AG04450 (cell line): ENCODE measurements at regions of chr6 and their contacts with region 1.

Region 1: GRCh38 chr6:97215157-97215769 is 67.8 kb downstream of the MMS22L start:
- DNase-seq: peak; percentile 29
- H3K4me3 ChIP-seq: no peak overlapping the region
- H3K27ac ChIP-seq: no peak overlapping the region
- H3K27me3 ChIP-seq: no peaks in the 10 kb centered on the region
- CTCF ChIP-seq: peak; percentile 76

Region 2: DNA sequence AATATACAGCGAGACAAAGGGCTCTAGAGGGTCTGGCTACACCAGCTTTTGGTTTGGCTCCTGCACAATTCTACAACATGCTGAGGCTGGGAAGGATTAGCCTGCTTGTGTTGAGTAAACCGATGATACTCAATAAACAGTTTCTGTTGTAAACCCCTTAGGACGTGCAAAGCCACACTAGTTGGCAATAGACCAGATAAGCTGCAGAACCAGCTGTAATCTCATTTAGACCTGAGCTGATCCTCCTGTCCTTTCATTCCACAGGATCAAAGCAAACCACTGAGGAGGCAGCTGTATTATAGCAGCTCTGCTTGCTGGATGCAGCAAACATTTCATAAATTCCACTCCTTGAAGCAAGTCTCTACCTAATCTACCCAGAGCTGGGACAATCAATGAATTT is 11.9 kb before region 1 on chr6:
- CTCF ChIA-PET with region 1: interaction called, 184 read pairs
- POLR2A ChIA-PET with region 1: no interaction called
- DNase-seq: peak; percentile 65
- H3K4me3 ChIP-seq: no peak overlapping the region
- H3K27ac ChIP-seq: no peak overlapping the region
- H3K27me3 ChIP-seq: no peaks in the 10 kb centered on the region
- CTCF ChIP-seq: no peak

Region 3: GRCh38 chr6:97240222-97240621 is 25.0 kb after region 1 on chr6:
- CTCF ChIA-PET with region 1: interaction called, 21 read pairs
- POLR2A ChIA-PET with region 1: no interaction called
- DNase-seq: no peak
- H3K4me3 ChIP-seq: no peak overlapping the region
- H3K27ac ChIP-seq: no peak overlapping the region
- H3K27me3 ChIP-seq: no peaks in the 10 kb centered on the region
- CTCF ChIP-seq: no peak

Region 4: GRCh38 chr6:97361286-97361685 is 146.0 kb after region 1 on chr6:
- CTCF ChIA-PET with region 1: interaction called, 10 read pairs
- POLR2A ChIA-PET with region 1: no interaction called
- DNase-seq: no peak
- H3K4me3 ChIP-seq: no peak overlapping the region
- H3K27ac ChIP-seq: no peak overlapping the region
- H3K27me3 ChIP-seq: no peaks in the 10 kb centered on the region
- CTCF ChIP-seq: no peak

Region 5: GRCh38 chr6:97437087-97437486 is 221.8 kb after region 1 on chr6:
- CTCF ChIA-PET with region 1: interaction called, 10 read pairs
- POLR2A ChIA-PET with region 1: no interaction called
- DNase-seq: no peak
- H3K4me3 ChIP-seq: no peak overlapping the region
- H3K27ac ChIP-seq: no peak overlapping the region
- H3K27me3 ChIP-seq: no peaks in the 10 kb centered on the region
- CTCF ChIP-seq: peak; percentile 95